Mammary epithelial cell (primary cell): ENCODE measurements at regions of chr6 and their contacts with region 1.

Region 1: GRCh38 chr6:87472525-87473418 is at the start of gene SLC35A1:
- DNase-seq: peak; percentile 80
- H3K4me3 ChIP-seq: peak within 1 kb of the TSS; percentile 57 to 95 (median 76)
- H3K27ac ChIP-seq: peak within 1 kb of the TSS; percentile 80
- H3K4me1 ChIP-seq: peaks cover 6% of the 10 kb centered on the region
- H3K27me3 ChIP-seq: no peaks in the 10 kb centered on the region
- CTCF ChIP-seq: peak in 1 of 2 donors; percentile 19
- total RNA-seq, gene SLC35A1: 9.7 to 12.5 TPM

Region 2: GRCh38 chr6:87154993-87155841 is 317.6 kb before region 1 on chr6 and contains the start of gene ZNF292:
- CTCF ChIA-PET with region 1: no interaction called
- dilution Hi-C with region 1: no loop called
- in situ Hi-C with region 1: no loop called
- intact Hi-C with region 1: loop called (anchors 10 kb)
- DNase-seq: peak; percentile 99
- H3K4me3 ChIP-seq: peak within 1 kb of the TSS; percentile 69 to 94 (median 87)
- H3K27ac ChIP-seq: peak within 1 kb of the TSS; percentile 97
- H3K4me1 ChIP-seq: peaks cover 25% of the 10 kb centered on the region
- H3K27me3 ChIP-seq: no peaks in the 10 kb centered on the region
- CTCF ChIP-seq: no peak
- total RNA-seq, gene ZNF292: 27.1 to 27.5 TPM

Region 3: GRCh38 chr6:87322304-87323212 is 150.2 kb before region 1 on chr6 and contains the start of gene SMIM8:
- CTCF ChIA-PET with region 1: no interaction called
- dilution Hi-C with region 1: no loop called
- in situ Hi-C with region 1: no loop called
- intact Hi-C with region 1: loop called (anchors 1 kb)
- DNase-seq: peak; percentile 81
- H3K4me3 ChIP-seq: peak within 1 kb of the TSS; percentile 81 to 96 (median 91)
- H3K27ac ChIP-seq: peak within 1 kb of the TSS; percentile 67
- H3K4me1 ChIP-seq: no peaks in the 10 kb centered on the region
- H3K27me3 ChIP-seq: no peaks in the 10 kb centered on the region
- CTCF ChIP-seq: peak; percentile 85 to 98
- total RNA-seq, gene SMIM8: 6.9 to 8.7 TPM

Region 4: DNA sequence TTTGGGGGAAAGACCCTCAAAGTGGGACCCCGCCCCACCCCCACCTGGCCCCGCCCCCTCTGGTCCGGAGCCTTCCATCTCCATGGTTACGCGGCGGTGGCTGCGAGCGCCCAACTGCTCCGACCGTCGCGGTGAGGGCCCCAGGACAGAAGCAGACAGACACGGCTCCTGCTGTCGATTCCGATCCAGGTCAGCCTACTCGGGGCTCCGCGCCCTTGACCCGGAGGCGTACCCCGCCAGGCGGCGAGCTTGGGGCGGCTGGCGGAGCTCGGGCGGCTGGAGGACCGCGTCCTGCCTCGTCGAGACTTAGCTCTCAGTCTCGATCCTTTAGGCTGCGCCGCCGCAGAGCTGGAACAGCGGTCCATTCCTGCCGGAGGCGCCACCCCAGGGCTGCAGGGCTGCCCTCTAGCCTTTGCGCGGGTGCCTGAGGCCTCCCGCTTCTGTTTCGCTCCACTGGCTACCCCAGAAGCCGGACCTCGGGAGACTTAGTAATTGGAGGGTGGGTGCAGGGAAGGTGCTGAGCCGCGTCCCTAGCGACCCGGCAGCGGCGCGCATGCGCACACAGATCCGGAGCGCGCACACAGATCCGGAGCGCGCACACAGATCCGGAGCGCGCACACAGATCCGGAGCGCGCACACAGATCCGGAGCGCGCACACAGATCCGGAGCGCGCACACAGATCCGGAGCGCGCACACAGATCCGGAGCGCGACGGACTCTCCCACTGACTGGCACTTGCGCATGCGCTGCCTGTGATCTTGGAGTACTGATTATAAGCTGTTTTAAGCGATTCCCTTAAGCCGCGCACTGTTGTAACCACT is 64.7 kb before region 1 on chr6 and contains the start of gene CFAP206:
- CTCF ChIA-PET with region 1: no interaction called
- dilution Hi-C with region 1: no loop called
- in situ Hi-C with region 1: no loop called
- intact Hi-C with region 1: loop called (anchors 1 kb)
- DNase-seq: peak; percentile 76
- H3K4me3 ChIP-seq: peak within 1 kb of the TSS; percentile 74 to 91 (median 82)
- H3K27ac ChIP-seq: peak within 1 kb of the TSS; percentile 39
- H3K4me1 ChIP-seq: peaks cover 8% of the 10 kb centered on the region
- H3K27me3 ChIP-seq: no peaks in the 10 kb centered on the region
- CTCF ChIP-seq: peak; percentile 14 to 43
- total RNA-seq, gene CFAP206: 0.99 to 1.2 TPM

Region 5: DNA sequence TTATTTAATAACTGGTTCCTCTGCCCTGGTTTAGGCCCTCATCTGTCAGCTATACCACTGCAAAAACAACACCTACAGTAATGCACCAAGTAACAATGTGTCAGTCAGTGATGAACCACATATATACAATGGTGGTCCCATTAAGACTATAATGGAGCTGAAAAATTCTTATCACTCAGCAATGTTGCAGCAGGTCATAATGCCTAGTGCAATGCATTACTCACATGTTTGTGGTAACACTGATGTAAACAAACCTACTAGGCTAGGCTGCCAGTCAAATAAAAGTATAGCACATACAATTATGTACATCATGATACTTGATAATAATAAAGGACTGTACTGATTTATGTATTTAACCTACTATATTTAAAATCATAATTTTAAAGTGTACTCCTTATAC is 85.7 kb after region 1 on chr6:
- CTCF ChIA-PET with region 1: no interaction called
- dilution Hi-C with region 1: no loop called
- in situ Hi-C with region 1: no loop called
- intact Hi-C with region 1: no loop called
- DNase-seq: no peak
- H3K4me3 ChIP-seq: no peak overlapping the region
- H3K27ac ChIP-seq: no peak overlapping the region
- H3K4me1 ChIP-seq: no peaks in the 10 kb centered on the region
- H3K27me3 ChIP-seq: no peaks in the 10 kb centered on the region
- CTCF ChIP-seq: no peak

Region 6: DNA sequence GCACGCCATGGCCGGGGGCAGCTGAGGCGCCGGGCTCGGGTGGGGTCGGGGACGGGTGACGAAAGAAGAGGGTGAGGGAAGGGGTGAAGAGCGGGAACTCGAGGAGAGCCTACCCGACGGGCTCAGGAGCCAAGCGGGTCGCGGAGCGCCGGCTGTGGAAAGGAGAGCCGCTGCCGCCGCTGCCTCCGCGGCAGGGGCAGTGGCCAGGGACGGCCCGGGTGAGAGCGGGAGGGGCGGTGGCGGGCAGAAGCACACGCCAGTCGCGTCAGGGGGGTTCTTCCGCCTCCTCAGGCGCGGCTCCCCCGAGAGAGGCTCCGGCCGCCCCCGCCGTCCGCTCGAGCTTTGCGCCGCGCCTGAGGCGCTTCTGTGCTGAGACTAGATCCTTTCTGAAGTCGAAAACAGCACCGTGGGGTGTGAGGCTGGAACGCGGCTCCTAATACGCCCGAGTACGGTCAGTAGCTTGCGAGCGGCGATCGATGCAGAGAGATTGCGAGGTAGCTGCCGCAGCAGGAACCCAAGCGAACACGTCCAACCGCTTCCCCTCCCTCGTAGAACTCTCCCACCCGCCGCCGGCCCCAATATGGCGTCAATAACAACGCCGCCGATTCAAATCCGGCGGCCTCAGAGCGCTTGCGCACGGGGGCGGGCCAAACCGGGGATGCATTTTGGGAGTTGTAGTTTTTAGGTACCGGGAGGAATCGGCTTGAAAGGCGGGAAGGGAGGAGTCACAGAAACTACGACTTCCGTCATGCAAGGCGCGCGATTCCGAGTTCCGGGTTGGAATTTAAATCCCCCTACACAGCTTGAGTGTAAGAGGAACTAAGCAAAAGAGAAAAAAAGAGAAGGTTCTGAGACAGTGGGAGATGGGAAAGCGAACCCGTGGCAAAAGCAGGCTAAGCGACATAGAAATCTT is 229.2 kb after region 1 on chr6 and contains the start of gene AKIRIN2:
- CTCF ChIA-PET with region 1: no interaction called
- dilution Hi-C with region 1: no loop called
- in situ Hi-C with region 1: no loop called
- intact Hi-C with region 1: no loop called
- DNase-seq: peak; percentile 98
- H3K4me3 ChIP-seq: peak within 1 kb of the TSS; percentile 68 to 90 (median 85)
- H3K27ac ChIP-seq: peak within 1 kb of the TSS; percentile 94
- H3K4me1 ChIP-seq: peaks cover 15% of the 10 kb centered on the region
- H3K27me3 ChIP-seq: no peaks in the 10 kb centered on the region
- CTCF ChIP-seq: no peak
- total RNA-seq, gene AKIRIN2: 32.7 to 65.7 TPM